ENCODE measurements at regions of chr3 and their contacts with region 1.

Region 1: GRCh38 chr3:182909318-182910040 is 70.9 kb downstream of the DCUN1D1 start:
- DNase-seq: no peak
- ATAC-seq: peak; percentile 57
- H3K4me3 Mint-ChIP-seq: no peak overlapping the region
- H3K27ac Mint-ChIP-seq: no peak overlapping the region
- H3K4me1 Mint-ChIP-seq: peaks cover 39% of the 10 kb centered on the region
- H3K27me3 Mint-ChIP-seq: no peaks in the 10 kb centered on the region

Region 2: DNA sequence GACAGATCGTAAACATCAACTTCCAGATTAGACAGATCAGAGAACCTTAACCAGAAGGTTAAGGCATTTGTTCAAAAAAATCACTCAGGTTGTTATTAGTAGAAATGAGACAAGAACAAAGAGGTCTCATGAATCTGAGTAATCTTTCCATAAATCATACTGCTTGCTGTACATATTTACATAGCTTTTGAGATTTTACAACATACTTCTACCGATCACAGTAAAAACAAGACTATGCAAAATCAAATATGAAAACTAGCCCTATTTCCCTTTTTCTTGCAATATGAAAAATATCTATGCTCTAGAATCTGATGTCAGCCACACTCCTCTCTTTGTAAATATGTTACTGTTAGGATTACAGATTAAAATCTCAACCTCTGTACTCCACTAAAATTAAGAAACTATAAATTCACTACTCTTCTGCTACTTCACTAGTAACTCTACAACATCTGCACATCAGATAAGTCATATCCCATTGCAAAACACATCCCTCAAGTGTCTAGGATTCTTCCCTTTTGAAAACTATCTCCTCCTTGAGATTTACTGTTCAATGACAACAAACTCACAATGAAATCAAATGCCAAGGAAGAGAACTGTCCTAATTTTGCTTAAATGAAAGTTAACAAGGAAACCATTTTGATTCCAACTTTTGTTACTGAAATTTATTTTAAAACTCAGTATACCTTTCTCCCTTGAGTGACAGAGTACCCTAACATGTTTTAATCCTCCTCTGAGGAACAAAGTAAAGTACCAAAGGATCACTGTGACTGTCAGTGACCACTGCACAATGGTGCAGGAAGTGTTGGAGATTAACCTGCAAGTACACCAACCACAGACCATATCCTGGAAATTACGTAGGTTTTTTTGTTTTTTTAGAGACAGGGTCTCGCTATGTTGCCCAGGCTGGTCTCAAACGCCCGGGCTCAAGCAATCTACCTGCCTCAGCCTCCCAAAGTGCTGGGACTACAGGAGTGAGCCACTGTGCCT is 58.0 kb after region 1 on chr3:
- CTCF ChIA-PET with region 1: no interaction called
- POLR2A ChIA-PET with region 1: no interaction called
- intact Hi-C with region 1: loop called (anchors 5 kb)
- DNase-seq: no peak
- ATAC-seq: peak; percentile 69
- H3K4me3 Mint-ChIP-seq: peak overlapping the region; percentile 32
- H3K27ac Mint-ChIP-seq: peak overlapping the region; percentile 92
- H3K4me1 Mint-ChIP-seq: peaks cover 62% of the 10 kb centered on the region
- H3K27me3 Mint-ChIP-seq: no peaks in the 10 kb centered on the region

Region 3: DNA sequence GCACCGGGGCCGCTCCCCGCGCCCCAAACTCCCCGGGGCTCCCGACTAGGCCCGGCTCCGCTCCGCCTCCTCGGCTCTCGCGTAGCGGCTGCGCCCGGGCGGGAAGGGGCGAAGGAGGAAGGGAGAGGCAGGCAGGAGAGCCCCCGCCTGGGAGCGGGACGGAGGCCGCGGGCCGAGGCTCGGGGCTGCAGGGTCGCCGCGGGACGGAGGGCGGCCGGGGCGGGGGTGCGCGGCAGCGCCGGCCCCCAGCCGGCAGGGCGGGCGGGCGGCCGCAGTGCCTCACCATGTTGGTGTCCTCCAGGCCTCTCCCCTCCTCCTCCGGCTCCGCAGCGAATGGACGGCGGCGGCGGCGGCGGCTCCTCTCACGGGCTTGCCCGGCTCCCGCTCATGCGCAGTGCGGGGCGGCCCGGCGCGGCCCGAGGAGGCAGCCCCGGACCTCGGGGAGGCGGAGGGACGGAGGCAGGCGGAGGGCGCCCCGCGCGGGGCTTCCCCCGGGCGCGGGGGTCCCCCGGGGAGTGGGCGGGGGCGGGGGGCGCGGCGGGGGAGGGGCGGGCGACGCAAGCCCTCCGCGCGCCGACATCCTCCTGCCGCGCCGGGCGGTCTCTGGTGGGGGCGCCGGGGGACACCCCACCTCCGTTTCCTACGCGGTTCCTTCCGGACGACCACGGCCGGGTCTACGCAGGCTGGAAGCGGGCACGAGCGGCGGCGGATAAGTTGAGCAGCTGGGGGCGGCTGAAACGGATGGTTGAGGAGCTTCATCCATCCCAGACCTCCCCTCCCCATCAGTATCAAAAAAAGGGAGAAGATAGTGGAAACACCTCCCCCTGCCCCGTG is 70.9 kb after region 1 on chr3 and contains the start of gene DCUN1D1:
- CTCF ChIA-PET with region 1: interaction called, 4 read pairs
- POLR2A ChIA-PET with region 1: no interaction called
- intact Hi-C with region 1: loop called in 1 of 2 experiments (anchors 2 kb)
- DNase-seq: peak; percentile 93
- ATAC-seq: peak; percentile 94
- H3K4me3 Mint-ChIP-seq: peak within 1 kb of the TSS; percentile 95
- H3K27ac Mint-ChIP-seq: peak within 1 kb of the TSS; percentile 92
- H3K4me1 Mint-ChIP-seq: peaks cover 25% of the 10 kb centered on the region
- H3K27me3 Mint-ChIP-seq: no peaks in the 10 kb centered on the region
- total RNA-seq, gene DCUN1D1: 40.0 to 52.9 TPM

Measured in activated CD4-positive, alpha-beta T cell treated with anti-CD3 and anti-CD28 coated beads for 36 hours (primary cell).